ENCODE measurements at regions of chr4 and their contacts with region 1.

Region 1: DNA sequence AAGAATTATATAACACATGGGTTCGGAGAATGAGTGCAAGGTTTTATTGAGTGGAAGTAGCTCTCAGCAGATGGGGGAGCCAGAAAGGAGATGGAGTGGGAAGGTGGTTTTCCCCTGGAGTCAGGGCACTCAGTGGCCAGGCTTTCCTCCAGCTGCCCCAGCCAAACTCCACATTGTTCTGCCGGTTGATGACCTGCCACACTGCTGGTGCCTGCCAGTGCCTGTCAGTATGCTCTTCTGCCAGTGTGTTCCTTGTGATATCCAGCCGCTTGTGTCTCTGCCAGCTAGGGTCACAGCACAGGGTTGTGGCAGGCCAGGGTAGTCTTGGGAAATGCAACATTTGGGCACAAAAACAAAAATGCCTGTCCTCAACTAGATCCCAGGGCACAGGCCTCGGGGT is 604.8 kb upstream of the TECRL start:
- DNase-seq: no peak
- H3K4me3 Mint-ChIP-seq: no peak overlapping the region
- H3K27ac Mint-ChIP-seq: no peak overlapping the region
- H3K4me1 Mint-ChIP-seq: no peaks in the 10 kb centered on the region
- H3K27me3 Mint-ChIP-seq: no peaks in the 10 kb centered on the region
- CTCF ChIP-seq: no peak

Region 2: DNA sequence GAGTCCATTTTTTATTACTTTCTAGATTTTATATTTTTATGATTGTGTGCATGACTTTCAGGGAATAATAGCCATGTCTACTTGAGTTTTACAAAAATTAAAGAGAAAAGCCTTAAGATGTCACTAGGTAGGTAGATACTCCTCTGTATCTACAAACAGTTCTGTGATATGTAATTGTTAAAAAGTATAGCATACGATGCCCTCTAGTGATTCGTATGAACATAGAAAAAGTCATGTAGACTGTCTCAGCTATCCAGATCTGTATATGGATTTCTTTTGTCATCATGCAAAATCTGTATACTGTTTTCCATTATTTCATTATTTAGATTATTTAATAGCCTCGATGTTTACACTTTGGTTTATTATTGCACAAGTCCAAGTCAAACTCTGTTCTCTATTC is 1674.6 kb after region 1 on chr4:
- CTCF ChIA-PET with region 1: no interaction called
- intact Hi-C with region 1: loop called (anchors 10 kb)
- DNase-seq: no peak
- H3K4me3 Mint-ChIP-seq: no peak overlapping the region
- H3K27ac Mint-ChIP-seq: no peak overlapping the region
- H3K4me1 Mint-ChIP-seq: no peaks in the 10 kb centered on the region
- H3K27me3 Mint-ChIP-seq: no peaks in the 10 kb centered on the region
- CTCF ChIP-seq: no peak

Measured in Calu3 (cell line).